A549 (cell line): ENCODE measurements at regions of chr21 and their contacts with region 1.

Region 1: DNA sequence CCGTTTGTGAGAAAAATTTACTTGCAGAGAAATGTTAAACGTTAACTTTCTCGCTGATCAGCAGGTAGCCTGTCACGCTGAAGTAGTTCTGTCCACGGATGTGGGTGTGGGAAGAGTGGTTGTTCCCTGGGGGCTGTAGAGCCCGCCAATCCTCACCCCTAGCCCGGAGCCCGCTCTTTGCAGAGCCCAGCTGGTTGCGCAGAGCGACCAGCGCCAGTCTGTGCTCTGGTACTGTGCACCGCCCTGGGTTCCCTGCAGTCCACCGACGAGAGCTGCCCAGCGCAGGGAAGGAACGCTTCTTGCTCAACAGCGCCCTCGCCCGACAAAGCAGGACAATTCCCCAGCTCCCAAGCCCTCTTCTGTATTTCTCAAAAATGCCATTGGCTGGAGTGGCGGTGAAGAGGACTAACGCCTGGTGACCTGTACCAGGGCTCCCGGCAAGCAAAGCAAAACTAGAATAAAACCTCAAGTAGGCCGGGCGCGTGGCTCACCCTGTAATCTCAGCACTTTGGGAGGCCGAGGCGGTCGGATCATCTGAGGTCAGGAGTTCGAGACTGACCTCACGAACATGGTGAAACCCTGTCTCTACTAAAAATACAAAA is 3.3 kb downstream of the RIPPLY3 start:
- DNase-seq: peak; percentile 77 to 87
- ATAC-seq: peak; percentile 97 to 98
- H3K4me3 ChIP-seq: peak overlapping the region; percentile 39; the same call in 2 of the 3 replicates
- H3K27ac ChIP-seq: peak overlapping the region; percentile 69 to 78
- H3K4me1 ChIP-seq: no peaks in the 10 kb centered on the region
- CTCF ChIP-seq: peak; percentile 68
- EP300 ChIP-seq: no peak
- POLR2A ChIP-seq: no peak
- RAD21 ChIP-seq: peak; percentile 59 to 65

Region 2: DNA sequence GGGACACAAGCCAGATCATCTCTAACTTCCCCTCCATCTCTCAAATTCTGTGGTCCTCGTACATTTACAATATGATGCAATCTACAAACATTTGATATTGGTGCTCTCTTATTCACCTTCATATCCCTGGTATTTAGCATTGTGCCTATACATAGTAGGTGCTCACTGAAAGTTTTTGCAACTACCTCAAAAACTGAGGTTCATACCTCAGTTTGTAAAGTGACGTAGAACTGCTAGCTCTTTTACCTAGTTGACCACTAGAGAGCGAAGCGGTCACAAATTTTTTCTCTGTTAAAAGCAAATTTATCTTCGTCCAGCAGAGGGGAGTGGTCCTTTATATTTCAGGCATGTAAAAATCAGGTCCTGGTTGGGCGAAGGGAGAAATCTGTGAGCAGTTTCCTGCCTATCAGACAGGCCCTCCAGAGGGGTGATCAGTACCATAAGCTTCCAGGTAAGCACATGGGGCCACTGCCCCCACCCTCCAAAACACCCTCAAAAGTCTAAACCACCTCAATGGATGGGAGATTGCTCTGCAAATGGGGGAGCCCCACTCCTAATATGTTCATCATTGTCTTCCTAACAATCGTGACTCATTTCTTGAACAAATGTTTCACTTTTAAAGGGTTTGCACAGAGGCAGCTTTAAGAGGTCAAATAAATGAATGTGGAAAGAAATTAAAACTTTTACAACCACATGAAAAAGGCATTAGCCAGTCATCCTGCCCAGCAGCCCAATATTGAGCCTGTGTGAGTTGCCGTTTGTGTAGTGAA is 32.8 kb before region 1 on chr21:
- CTCF ChIA-PET with region 1: interaction called, 55 read pairs
- POLR2A ChIA-PET with region 1: no interaction called
- DNase-seq: peak; percentile 23 to 84
- ATAC-seq: peak; percentile 82 to 88
- H3K4me3 ChIP-seq: no peak overlapping the region
- H3K27ac ChIP-seq: peak overlapping the region; percentile 10 to 69; a peak in 3 of 6 replicates
- H3K4me1 ChIP-seq: peaks cover 9% of the 10 kb centered on the region; the same call in 1 of the 3 replicates
- CTCF ChIP-seq: peak; percentile 83
- EP300 ChIP-seq: no peak
- POLR2A ChIP-seq: no peak
- RAD21 ChIP-seq: peak; percentile 71 to 79

Region 3: GRCh38 chr21:36989699-36990507 is 19.9 kb before region 1 on chr21:
- CTCF ChIA-PET with region 1: interaction called, 36 read pairs
- POLR2A ChIA-PET with region 1: interaction called, 5 read pairs
- DNase-seq: peak; percentile 87 to 91
- ATAC-seq: peak; percentile 93 to 96
- H3K4me3 ChIP-seq: peak overlapping the region; percentile 46
- H3K27ac ChIP-seq: peak overlapping the region; percentile 80 to 96
- H3K4me1 ChIP-seq: peaks cover 15% of the 10 kb centered on the region
- CTCF ChIP-seq: peak; percentile 72
- EP300 ChIP-seq: no peak
- POLR2A ChIP-seq: peak; percentile 50
- RAD21 ChIP-seq: peak in 1 of 2 experiments; percentile 29; a peak in 1 of 5 replicates

Region 4: DNA sequence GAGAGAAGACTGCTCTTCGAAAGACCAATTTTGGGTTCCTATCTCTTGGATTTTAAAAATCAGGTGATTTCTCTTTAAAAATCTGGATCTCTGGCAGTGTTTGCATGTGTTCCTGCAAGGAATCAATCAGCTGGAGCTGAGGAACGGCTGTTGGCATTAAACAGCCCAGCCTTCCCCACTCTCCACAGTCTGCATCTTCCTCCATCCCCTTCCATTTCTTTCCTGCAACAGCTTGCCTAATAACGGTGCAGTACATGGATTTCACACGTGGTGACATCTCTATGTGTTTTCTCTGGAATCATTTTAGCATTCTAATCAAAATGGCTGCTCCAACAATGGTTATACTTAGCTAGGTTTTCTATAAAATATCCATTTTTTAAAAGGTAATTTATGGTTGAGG is 16.7 kb after region 1 on chr21:
- CTCF ChIA-PET with region 1: interaction called, 11 read pairs
- POLR2A ChIA-PET with region 1: no interaction called
- DNase-seq: no peak
- ATAC-seq: no peak
- H3K4me3 ChIP-seq: no peak overlapping the region
- H3K27ac ChIP-seq: no peak overlapping the region
- H3K4me1 ChIP-seq: no peaks in the 10 kb centered on the region
- CTCF ChIP-seq: no peak
- EP300 ChIP-seq: no peak
- POLR2A ChIP-seq: no peak
- RAD21 ChIP-seq: no peak

Region 5: GRCh38 chr21:37119421-37120218 is 109.8 kb after region 1 on chr21:
- CTCF ChIA-PET with region 1: no interaction called
- POLR2A ChIA-PET with region 1: no interaction called
- DNase-seq: no peak
- ATAC-seq: no peak
- H3K4me3 ChIP-seq: no peak overlapping the region
- H3K27ac ChIP-seq: no peak overlapping the region
- H3K4me1 ChIP-seq: peaks cover 6% of the 10 kb centered on the region; the same call in 2 of the 3 replicates
- CTCF ChIP-seq: no peak
- EP300 ChIP-seq: no peak
- POLR2A ChIP-seq: no peak
- RAD21 ChIP-seq: no peak